CD8-positive, alpha-beta T cell (primary cell): ENCODE measurements at regions of chr2 and their contacts with region 1.

Region 1: DNA sequence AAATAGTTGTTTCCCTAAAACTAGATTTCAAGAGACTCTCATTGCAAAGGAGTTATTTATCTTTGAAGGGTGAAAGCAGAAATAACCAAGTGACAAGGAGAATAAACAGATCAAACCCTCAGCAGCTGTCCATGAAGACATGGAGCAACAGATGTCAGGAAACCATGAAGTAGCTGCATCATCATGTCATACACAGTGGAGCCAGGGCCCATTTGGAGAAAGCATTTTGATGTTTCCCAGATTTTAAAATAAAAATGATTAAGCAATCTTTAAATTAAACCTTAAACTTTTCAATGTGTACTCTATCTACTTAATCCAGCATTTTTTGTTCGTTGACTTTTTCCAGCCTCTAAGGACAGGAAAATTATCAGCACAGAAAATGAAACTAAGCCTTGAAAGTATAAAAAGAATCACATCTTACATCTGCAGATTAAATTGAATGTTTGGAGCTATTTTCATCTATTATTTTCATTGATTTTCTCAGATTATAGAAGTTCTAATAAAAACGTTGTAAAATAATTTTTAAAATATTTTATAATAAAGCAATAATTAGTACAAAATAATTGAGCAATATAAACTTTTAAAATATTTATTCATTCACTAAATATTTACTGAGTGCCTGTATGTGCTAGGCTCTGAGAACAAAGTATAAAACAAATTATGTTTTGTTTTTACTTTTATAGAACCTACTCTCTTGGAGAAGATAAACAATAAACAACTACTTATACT is 860.1 kb downstream of the BCL11A start:
- DNase-seq: no peak
- ATAC-seq: no peak
- H3K4me3 ChIP-seq: no peak overlapping the region
- H3K4me3 Mint-ChIP-seq: no peak overlapping the region
- H3K27ac ChIP-seq: no peak overlapping the region
- H3K27ac Mint-ChIP-seq: no peak overlapping the region
- H3K4me1 ChIP-seq: no peaks in the 10 kb centered on the region
- H3K4me1 Mint-ChIP-seq: no peaks in the 10 kb centered on the region
- H3K27me3 ChIP-seq: no peaks in the 10 kb centered on the region
- H3K27me3 Mint-ChIP-seq: no peaks in the 10 kb centered on the region
- CTCF ChIP-seq: no peak

Region 2: DNA sequence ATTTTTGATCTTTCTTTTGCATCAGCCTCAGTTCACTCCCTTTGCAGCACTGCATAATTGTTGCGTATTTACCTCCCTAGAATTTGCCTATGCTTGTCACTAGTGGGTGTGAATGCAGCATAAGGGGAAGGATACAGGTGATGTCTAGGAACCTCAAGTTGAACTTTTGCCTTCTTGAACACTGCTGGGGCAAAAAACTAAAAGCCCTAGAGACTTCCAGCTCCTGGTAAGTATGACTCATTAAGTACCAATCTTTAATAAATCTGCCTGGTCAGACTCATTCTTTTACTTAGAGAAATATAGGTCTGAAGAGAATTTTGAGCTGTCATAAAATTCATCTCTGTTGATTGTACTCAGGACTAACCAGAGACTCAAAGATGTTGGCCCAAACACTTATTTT is 905.0 kb before region 1 on chr2:
- CTCF ChIA-PET with region 1: no interaction called
- POLR2A ChIA-PET with region 1: no interaction called
- intact Hi-C with region 1: loop called in 1 of 2 experiments (anchors 10 kb)
- DNase-seq: no peak
- ATAC-seq: no peak
- H3K4me3 ChIP-seq: no peak overlapping the region
- H3K4me3 Mint-ChIP-seq: no peak overlapping the region
- H3K27ac ChIP-seq: no peak overlapping the region
- H3K27ac Mint-ChIP-seq: no peak overlapping the region
- H3K4me1 ChIP-seq: no peaks in the 10 kb centered on the region
- H3K4me1 Mint-ChIP-seq: no peaks in the 10 kb centered on the region
- H3K27me3 ChIP-seq: no peaks in the 10 kb centered on the region
- H3K27me3 Mint-ChIP-seq: no peaks in the 10 kb centered on the region
- CTCF ChIP-seq: no peak